AG04450 (cell line): ENCODE measurements at regions of chr17 and their contacts with region 1.

Region 1: DNA sequence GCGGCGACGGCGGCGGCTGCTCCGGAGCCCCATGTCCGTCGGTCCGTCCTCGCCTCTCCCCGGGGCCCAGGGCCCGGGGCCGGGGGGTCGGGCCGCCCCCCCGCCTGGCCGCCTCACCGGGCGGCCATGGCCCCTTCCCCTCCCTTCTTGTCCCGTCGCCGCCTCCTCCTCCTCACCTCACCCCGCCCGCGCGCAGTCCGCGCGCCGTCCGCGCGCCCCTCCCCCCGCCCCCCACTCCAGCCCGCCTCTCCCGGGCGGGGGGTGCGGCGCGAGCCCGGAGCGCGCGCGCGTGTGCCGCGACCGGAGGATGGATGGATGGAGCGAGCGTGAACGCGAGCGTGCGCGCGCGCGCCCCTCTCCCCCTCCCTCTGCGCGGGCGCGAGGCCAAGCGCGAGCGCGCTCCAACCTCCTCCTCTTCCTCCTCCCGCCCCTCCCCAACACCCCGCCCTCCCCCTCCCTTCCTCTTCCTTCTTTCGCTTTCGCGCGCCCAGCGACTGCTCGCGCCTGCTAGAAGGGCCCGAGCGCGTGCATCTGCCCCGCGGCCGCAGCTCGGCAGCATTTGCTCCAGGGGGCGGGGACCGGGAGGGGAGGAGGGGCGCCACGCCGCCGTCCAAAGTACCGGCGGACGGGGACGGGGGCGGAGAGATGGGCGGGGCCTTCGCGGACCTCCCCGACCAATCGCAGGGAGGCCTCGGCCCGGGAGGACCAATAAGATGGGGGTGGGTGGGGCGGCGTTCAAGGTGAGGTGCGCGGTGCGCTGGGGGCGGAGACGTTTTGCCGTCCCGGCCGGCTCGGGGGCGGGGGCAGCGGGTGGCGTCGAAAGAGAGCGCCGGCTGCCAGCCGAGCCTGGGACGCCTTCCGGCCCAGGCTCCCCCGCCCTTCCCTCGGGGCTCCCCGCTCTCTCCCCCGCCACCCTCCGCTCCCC is at the start of gene ATXN7L3:
- DNase-seq: peak; percentile 95
- H3K4me3 ChIP-seq: peak within 1 kb of the TSS; percentile 78
- H3K27ac ChIP-seq: peak within 1 kb of the TSS; percentile 89
- H3K27me3 ChIP-seq: no peaks in the 10 kb centered on the region
- CTCF ChIP-seq: no peak
- polyA plus RNA-seq, gene ATXN7L3: 44.1 and 51.6 TPM in 2 replicates

Region 2: DNA sequence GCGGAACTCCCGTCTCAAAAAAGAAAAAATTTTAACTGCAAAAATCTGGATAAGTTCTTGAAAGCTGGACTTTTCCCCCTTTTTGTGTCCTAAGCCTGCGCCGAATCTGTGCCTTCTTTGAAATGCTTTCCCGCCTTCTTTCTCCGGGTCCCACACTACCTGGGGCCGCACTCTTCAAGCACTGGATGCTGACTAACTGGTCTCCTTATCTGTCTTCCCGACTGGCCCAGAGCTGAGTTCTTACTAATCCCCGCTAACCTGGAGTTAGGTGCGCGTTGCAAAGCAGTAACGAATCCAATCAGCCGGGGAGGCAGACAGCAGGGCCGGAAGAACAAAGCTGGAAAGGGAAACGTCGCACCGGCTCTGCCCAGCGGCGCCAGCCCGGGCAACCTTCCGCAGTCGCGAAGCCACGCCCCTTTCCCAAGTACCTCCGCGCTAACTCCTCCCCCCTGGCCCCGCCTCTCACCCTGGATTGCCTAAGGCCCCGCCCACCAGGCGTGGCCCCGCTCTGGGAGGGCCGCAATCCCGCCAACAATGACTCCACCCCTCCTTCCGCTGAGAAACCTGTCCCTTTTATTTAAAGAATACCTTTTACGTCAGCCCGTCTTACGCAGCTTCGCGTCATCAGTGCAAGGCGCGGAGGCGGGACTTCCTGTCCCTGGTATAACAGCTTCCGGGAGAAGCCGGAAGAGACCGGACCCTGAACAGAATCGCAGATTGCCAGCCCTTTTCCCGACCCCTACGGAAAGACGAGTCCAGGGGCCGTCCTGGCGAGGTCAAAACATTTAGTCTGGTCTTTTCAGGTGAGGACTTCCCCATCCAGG is 13.3 kb before region 1 on chr17 and contains the start of gene TMUB2:
- CTCF ChIA-PET with region 1: interaction called, 3 read pairs
- POLR2A ChIA-PET with region 1: interaction called, 18 read pairs
- DNase-seq: peak; percentile 99
- H3K4me3 ChIP-seq: peak within 1 kb of the TSS; percentile 97
- H3K27ac ChIP-seq: peak within 1 kb of the TSS; percentile 97
- H3K27me3 ChIP-seq: no peaks in the 10 kb centered on the region
- CTCF ChIP-seq: no peak
- polyA plus RNA-seq, gene TMUB2: 34.3 and 37.1 TPM in 2 replicates

Region 3: GRCh38 chr17:44229090-44229489 is 29.3 kb after region 1 on chr17:
- CTCF ChIA-PET with region 1: no interaction called
- POLR2A ChIA-PET with region 1: no interaction called
- DNase-seq: no peak
- H3K4me3 ChIP-seq: no peak overlapping the region
- H3K27ac ChIP-seq: no peak overlapping the region
- H3K27me3 ChIP-seq: peaks cover 7% of the 10 kb centered on the region
- CTCF ChIP-seq: no peak

Region 4: GRCh38 chr17:44247440-44247841 is 47.6 kb after region 1 on chr17:
- CTCF ChIA-PET with region 1: no interaction called
- POLR2A ChIA-PET with region 1: no interaction called
- DNase-seq: no peak
- H3K4me3 ChIP-seq: no peak overlapping the region
- H3K27ac ChIP-seq: no peak overlapping the region
- H3K27me3 ChIP-seq: peaks cover 4% of the 10 kb centered on the region
- CTCF ChIP-seq: no peak